ENCODE measurements at regions of chr1 and their contacts with region 1.

Region 1: GRCh38 chr1:219209578-219209977 is 35.9 kb downstream of the LYPLAL1 start:
- DNase-seq: no peak
- H3K4me3 ChIP-seq: no peak overlapping the region
- H3K4me3 Mint-ChIP-seq: no peak overlapping the region
- H3K27ac Mint-ChIP-seq: no peak overlapping the region
- H3K4me1 ChIP-seq: no peaks in the 10 kb centered on the region
- H3K4me1 Mint-ChIP-seq: peaks cover 7% of the 10 kb centered on the region
- H3K27me3 ChIP-seq: no peaks in the 10 kb centered on the region
- H3K27me3 Mint-ChIP-seq: no peaks in the 10 kb centered on the region
- CTCF ChIP-seq: no peak

Region 2: GRCh38 chr1:219227360-219228057 is 17.9 kb after region 1 on chr1:
- CTCF ChIA-PET with region 1: no interaction called
- POLR2A ChIA-PET with region 1: no interaction called
- intact Hi-C with region 1: no loop called
- DNase-seq: no peak
- H3K4me3 ChIP-seq: no peak overlapping the region
- H3K4me3 Mint-ChIP-seq: no peak overlapping the region
- H3K27ac Mint-ChIP-seq: no peak overlapping the region
- H3K4me1 ChIP-seq: no peaks in the 10 kb centered on the region
- H3K4me1 Mint-ChIP-seq: no peaks in the 10 kb centered on the region
- H3K27me3 ChIP-seq: no peaks in the 10 kb centered on the region
- H3K27me3 Mint-ChIP-seq: no peaks in the 10 kb centered on the region
- CTCF ChIP-seq: no peak

Region 3: GRCh38 chr1:219247441-219247840 is 37.9 kb after region 1 on chr1:
- CTCF ChIA-PET with region 1: no interaction called
- POLR2A ChIA-PET with region 1: no interaction called
- intact Hi-C with region 1: no loop called
- DNase-seq: no peak
- H3K4me3 ChIP-seq: no peak overlapping the region
- H3K4me3 Mint-ChIP-seq: no peak overlapping the region
- H3K27ac Mint-ChIP-seq: no peak overlapping the region
- H3K4me1 ChIP-seq: no peaks in the 10 kb centered on the region
- H3K4me1 Mint-ChIP-seq: no peaks in the 10 kb centered on the region
- H3K27me3 ChIP-seq: no peaks in the 10 kb centered on the region
- H3K27me3 Mint-ChIP-seq: no peaks in the 10 kb centered on the region
- CTCF ChIP-seq: no peak

Region 4: GRCh38 chr1:219317762-219318353 is 108.3 kb after region 1 on chr1:
- CTCF ChIA-PET with region 1: no interaction called
- POLR2A ChIA-PET with region 1: no interaction called
- intact Hi-C with region 1: loop called (anchors 2 kb)
- DNase-seq: peak; percentile 16 to 39
- H3K4me3 ChIP-seq: no peak overlapping the region
- H3K4me3 Mint-ChIP-seq: no peak overlapping the region
- H3K27ac Mint-ChIP-seq: no peak overlapping the region
- H3K4me1 ChIP-seq: peaks cover 4% of the 10 kb centered on the region; the same call in 1 of the 2 replicates
- H3K4me1 Mint-ChIP-seq: no peaks in the 10 kb centered on the region
- H3K27me3 ChIP-seq: no peaks in the 10 kb centered on the region
- H3K27me3 Mint-ChIP-seq: no peaks in the 10 kb centered on the region
- CTCF ChIP-seq: peak in 1 of 2 experiments; percentile 59

Region 5: GRCh38 chr1:219416594-219417238 is 207.1 kb after region 1 on chr1:
- CTCF ChIA-PET with region 1: no interaction called
- POLR2A ChIA-PET with region 1: no interaction called
- intact Hi-C with region 1: loop called (anchors 1 kb)
- DNase-seq: peak; percentile 64 to 73
- H3K4me3 ChIP-seq: no peak overlapping the region
- H3K4me3 Mint-ChIP-seq: no peak overlapping the region
- H3K27ac Mint-ChIP-seq: no peak overlapping the region
- H3K4me1 ChIP-seq: peaks cover 4% of the 10 kb centered on the region; the same call in 1 of the 2 replicates
- H3K4me1 Mint-ChIP-seq: no peaks in the 10 kb centered on the region
- H3K27me3 ChIP-seq: no peaks in the 10 kb centered on the region
- H3K27me3 Mint-ChIP-seq: no peaks in the 10 kb centered on the region
- CTCF ChIP-seq: peak; percentile 67 to 69

Region 6: GRCh38 chr1:219566951-219567947 is 357.7 kb after region 1 on chr1:
- CTCF ChIA-PET with region 1: no interaction called
- POLR2A ChIA-PET with region 1: no interaction called
- intact Hi-C with region 1: loop called (anchors 2 kb)
- DNase-seq: peak in 1 of 2 experiments; percentile 20
- H3K4me3 ChIP-seq: no peak overlapping the region
- H3K4me3 Mint-ChIP-seq: no peak overlapping the region
- H3K27ac Mint-ChIP-seq: no peak overlapping the region
- H3K4me1 ChIP-seq: no peaks in the 10 kb centered on the region
- H3K4me1 Mint-ChIP-seq: no peaks in the 10 kb centered on the region
- H3K27me3 ChIP-seq: no peaks in the 10 kb centered on the region
- H3K27me3 Mint-ChIP-seq: peaks cover 3% of the 10 kb centered on the region
- CTCF ChIP-seq: peak; percentile 48 to 75